ENCODE measurements at regions of chr2 and their contacts with region 1.

Region 1: GRCh38 chr2:16773080-16773713 is 107.6 kb upstream of the CYRIA start:
- DNase-seq: no peak
- ATAC-seq: peak; percentile 90
- H3K4me3 ChIP-seq: no peak overlapping the region
- H3K27ac ChIP-seq: no peak overlapping the region
- H3K4me1 ChIP-seq: no peaks in the 10 kb centered on the region
- H3K27me3 ChIP-seq: peaks cover 3 to 5% of the 10 kb centered on the region in 2 experiments; a peak in 2 of 4 replicates
- CTCF ChIP-seq: peak; percentile 47 to 73 (median 52); a peak in 5 of 6 replicates
- EP300 ChIP-seq: no peak
- POLR2A ChIP-seq: no peak
- RAD21 ChIP-seq: peak; percentile 81

Region 2: DNA sequence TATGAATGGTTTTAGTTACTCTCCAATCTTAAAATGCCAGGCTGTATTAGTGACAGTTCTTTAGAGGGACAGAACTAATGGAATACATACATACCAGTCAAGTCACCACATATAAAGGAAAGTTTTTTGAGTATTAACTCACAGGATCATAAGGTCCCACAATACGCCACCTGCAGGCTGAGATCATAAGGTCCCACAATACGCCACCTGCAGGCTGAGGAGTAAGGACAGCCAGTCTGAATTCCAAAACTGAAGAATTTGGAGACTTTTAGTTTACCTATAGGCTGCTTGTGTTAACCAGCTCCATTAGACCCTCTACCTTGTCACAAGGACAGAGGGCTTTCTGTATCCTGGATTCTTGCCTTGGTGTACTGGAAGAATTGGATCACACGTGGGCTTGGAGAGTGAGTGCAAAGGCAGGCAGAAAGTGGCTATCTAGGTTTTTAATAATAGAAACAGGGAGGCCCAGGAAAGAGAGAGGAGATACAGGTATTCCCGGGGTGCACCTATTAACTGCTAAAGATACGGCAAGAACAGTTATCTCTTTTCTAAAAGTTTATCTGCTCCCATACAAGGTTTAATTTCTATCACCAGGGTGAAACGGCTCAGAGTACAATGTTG is 127.3 kb after region 1 on chr2:
- CTCF ChIA-PET with region 1: interaction called, 3 read pairs
- POLR2A ChIA-PET with region 1: no interaction called
- RAD21 ChIA-PET with region 1: no interaction called
- SMC1A ChIA-PET with region 1: no interaction called
- in situ Hi-C with region 1: no loop called
- intact Hi-C with region 1: loop called (anchors 1 kb)
- DNase-seq: no peak
- ATAC-seq: peak; percentile 93
- H3K4me3 ChIP-seq: no peak overlapping the region
- H3K27ac ChIP-seq: no peak overlapping the region
- H3K4me1 ChIP-seq: no peaks in the 10 kb centered on the region
- H3K27me3 ChIP-seq: no peaks in the 10 kb centered on the region; a peak in 1 of 4 replicates
- CTCF ChIP-seq: peak; percentile 83 to 94 (median 93)
- EP300 ChIP-seq: no peak
- POLR2A ChIP-seq: no peak
- RAD21 ChIP-seq: peak; percentile 47

Region 3: GRCh38 chr2:17148407-17149145 is 375.4 kb after region 1 on chr2:
- CTCF ChIA-PET with region 1: no interaction called
- POLR2A ChIA-PET with region 1: no interaction called
- RAD21 ChIA-PET with region 1: no interaction called
- SMC1A ChIA-PET with region 1: interaction called, 3 read pairs
- in situ Hi-C with region 1: no loop called
- intact Hi-C with region 1: loop called (anchors 10 kb)
- DNase-seq: no peak
- ATAC-seq: peak; percentile 41; the same call in 2 of the 3 replicates
- H3K4me3 ChIP-seq: no peak overlapping the region
- H3K27ac ChIP-seq: no peak overlapping the region
- H3K4me1 ChIP-seq: no peaks in the 10 kb centered on the region
- H3K27me3 ChIP-seq: no peaks in the 10 kb centered on the region
- CTCF ChIP-seq: peak; percentile 12 to 30 (median 26); a peak in 4 of 6 replicates
- EP300 ChIP-seq: no peak
- POLR2A ChIP-seq: no peak
- RAD21 ChIP-seq: 0 out of 2 replicates have a peak, but pooled peaks have one; percentile 7

Region 4: DNA sequence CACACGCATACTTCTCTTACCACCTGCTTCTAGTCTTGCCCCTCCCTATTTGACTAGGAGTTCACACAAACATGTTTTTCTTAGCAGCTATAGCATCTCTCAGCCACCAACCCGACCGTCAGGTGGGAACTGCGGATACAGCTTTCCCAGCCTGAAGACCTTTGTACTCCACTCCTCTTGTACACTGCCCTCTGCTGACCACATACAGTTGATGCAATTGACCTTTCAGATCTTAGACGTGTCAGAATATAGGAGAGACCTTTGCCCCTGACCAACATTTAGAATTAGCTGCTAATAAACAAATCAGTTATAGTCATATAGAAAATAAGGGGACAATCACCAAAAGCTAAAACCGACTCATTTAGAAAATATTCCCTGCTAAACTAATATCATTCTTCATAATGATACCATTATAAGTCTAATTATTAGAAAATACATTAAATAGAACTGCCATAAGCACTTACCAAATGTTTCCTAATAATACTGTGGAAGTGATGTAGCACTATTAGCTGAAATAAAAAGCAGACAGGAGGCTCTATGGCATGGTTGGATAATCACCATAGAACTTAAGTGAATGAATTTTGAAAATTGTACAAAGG is 536.6 kb after region 1 on chr2:
- CTCF ChIA-PET with region 1: interaction called, 14 read pairs
- POLR2A ChIA-PET with region 1: interaction called, 3 read pairs
- RAD21 ChIA-PET with region 1: interaction called, 8 read pairs
- SMC1A ChIA-PET with region 1: interaction called, 11 read pairs
- in situ Hi-C with region 1: loop called (anchors 5 kb)
- intact Hi-C with region 1: loop called (anchors 1 kb)
- DNase-seq: no peak
- ATAC-seq: peak; percentile 94
- H3K4me3 ChIP-seq: no peak overlapping the region
- H3K27ac ChIP-seq: no peak overlapping the region
- H3K4me1 ChIP-seq: no peaks in the 10 kb centered on the region
- H3K27me3 ChIP-seq: no peaks in the 10 kb centered on the region
- CTCF ChIP-seq: peak; percentile 68 to 77 (median 71)
- EP300 ChIP-seq: no peak
- POLR2A ChIP-seq: no peak
- RAD21 ChIP-seq: peak; percentile 79

Region 5: GRCh38 chr2:18299423-18300212 is 1526.4 kb after region 1 on chr2:
- CTCF ChIA-PET with region 1: no interaction called
- POLR2A ChIA-PET with region 1: no interaction called
- RAD21 ChIA-PET with region 1: no interaction called
- SMC1A ChIA-PET with region 1: no interaction called
- in situ Hi-C with region 1: no loop called
- intact Hi-C with region 1: no loop called
- DNase-seq: no peak
- ATAC-seq: no peak
- H3K4me3 ChIP-seq: no peak overlapping the region
- H3K27ac ChIP-seq: no peak overlapping the region
- H3K4me1 ChIP-seq: no peaks in the 10 kb centered on the region
- H3K27me3 ChIP-seq: no peaks in the 10 kb centered on the region
- CTCF ChIP-seq: no peak
- EP300 ChIP-seq: no peak
- POLR2A ChIP-seq: no peak
- RAD21 ChIP-seq: no peak